MCF 10A (cell line): ENCODE measurements at regions of chrX and their contacts with region 1.

Region 1: DNA sequence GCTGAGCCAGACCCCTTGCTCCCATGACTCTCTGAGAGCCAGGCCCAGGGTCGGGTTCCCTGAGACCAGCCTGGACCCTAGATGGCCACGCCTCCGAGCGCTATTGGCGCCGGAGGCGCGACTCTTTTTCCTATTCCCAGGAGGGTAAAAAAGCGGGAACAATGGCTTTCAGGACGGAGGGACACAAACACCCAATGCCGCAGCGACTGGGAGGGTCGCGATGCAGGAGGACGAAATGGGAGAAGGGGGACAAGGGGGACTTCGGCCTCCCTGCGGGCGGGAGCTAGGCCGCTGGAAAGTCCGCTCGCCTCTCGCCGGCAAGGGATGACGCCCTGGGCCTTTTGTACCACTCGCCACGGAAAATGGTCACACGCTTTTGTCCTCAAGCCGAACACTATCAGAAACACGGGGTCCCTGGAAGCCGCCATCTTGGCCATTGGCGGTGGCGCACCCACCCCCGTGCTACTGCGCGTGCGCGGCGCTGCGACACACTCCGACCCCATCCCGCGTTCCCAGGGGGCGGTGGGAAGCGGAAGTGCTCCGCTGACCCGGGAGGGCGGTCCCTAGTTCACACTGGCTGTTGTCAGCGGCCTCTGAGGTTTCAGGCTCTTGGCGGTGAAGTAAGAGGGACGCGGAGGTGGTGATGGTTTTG is 98.4 kb downstream of the ZNF674 start:
- DNase-seq: peak; percentile 68
- H3K4me3 Mint-ChIP-seq: peak overlapping the region; percentile 78
- H3K27ac Mint-ChIP-seq: peak overlapping the region; percentile 84
- H3K4me1 Mint-ChIP-seq: no peaks in the 10 kb centered on the region
- H3K27me3 Mint-ChIP-seq: peaks cover 26% of the 10 kb centered on the region
- CTCF ChIP-seq: no peak

Region 2: DNA sequence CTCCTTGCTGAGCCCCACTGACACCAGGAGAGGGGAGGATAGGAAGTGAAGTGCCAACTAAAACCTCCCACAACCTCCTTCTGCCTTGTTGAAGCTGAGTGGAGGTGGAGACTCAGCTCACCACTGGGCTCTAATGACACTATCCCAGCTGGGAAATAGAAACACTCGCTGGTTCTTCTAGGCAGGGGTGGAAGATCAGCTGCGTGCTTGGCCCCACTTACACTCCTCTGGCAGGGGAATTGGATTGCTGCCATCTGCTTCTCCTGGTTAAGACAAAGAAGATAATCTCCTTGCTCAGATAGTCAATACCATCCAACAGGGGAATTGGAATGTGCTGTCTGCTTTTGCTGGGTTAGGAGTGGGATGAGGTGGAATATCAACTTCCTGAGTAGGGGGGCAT is 294.1 kb before region 1 on chrX:
- CTCF ChIA-PET with region 1: no interaction called
- POLR2A ChIA-PET with region 1: no interaction called
- intact Hi-C with region 1: no loop called
- DNase-seq: no peak
- H3K4me3 Mint-ChIP-seq: no peak overlapping the region
- H3K27ac Mint-ChIP-seq: no peak overlapping the region
- H3K4me1 Mint-ChIP-seq: no peaks in the 10 kb centered on the region
- H3K27me3 Mint-ChIP-seq: peaks cover 48% of the 10 kb centered on the region
- CTCF ChIP-seq: no peak

Region 3: DNA sequence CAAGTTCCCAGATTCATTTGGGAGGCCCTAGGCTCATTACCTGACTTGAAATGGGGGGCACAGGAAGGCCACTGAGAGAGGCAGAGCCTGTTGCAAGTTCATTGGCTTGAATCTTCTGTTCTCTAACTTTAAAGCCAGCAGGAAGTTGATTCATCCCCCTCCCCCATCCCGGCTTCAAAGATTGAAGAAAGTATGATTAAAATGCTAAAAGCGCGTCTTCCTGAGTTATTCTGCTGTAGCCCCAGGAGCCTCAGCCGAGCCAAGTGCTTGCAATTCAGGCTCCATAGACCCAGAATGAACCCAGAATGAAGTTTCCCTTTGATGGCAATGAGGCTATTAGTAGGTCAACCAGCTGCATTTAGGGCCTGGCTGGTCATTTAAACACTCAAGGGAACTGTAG is 141.4 kb after region 1 on chrX:
- CTCF ChIA-PET with region 1: no interaction called
- POLR2A ChIA-PET with region 1: no interaction called
- intact Hi-C with region 1: loop called (anchors 10 kb)
- DNase-seq: peak; percentile 53
- H3K4me3 Mint-ChIP-seq: peak overlapping the region; percentile 16
- H3K27ac Mint-ChIP-seq: peak overlapping the region; percentile 42
- H3K4me1 Mint-ChIP-seq: peaks cover 14% of the 10 kb centered on the region
- H3K27me3 Mint-ChIP-seq: peaks cover 25% of the 10 kb centered on the region
- CTCF ChIP-seq: no peak